BJ (cell line): ENCODE measurements at regions of chr9 and their contacts with region 1.

Region 1: DNA sequence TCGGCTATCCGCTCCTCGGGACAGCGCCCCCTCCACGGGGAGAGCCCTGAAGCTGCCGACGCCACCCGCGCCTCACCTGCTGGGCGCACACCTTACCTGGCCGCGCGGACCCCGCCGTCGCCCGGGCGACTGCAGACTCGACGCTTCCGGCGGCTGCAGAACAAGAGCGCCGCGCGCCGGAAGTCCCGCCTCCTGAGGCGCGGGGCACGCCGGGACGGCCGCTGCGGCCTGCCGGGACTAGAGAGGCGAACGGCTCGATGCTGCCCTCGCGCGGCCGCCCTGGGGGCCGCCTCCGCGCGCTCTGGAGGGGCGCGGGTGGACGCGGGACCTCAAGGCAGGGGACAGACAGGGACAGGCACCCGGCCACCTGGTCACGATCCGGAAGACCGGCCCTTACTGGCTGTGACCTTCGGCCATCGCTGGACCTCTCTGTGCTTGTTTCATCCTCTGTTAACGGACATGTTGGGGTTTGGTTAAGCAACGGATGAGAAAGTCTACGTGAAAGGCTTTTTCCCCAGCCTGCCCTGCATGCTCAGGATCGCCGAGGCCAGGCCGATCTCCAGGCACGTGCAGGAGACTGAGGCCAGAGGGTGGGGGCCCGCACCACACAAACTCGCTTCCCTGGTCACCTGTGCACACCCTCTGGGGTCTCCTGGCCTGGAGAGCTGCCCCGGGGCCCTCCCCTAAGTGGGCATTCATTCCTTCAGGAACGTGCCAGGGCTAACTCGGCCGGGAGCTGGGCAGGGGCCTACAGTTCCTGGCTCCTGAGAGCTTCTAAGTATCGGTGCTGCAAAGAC is at the start of gene SNAPC4:
- DNase-seq: peak; percentile 17
- H3K4me3 ChIP-seq: peak within 1 kb of the TSS; percentile 59
- H3K27me3 ChIP-seq: no peaks in the 10 kb centered on the region
- CTCF ChIP-seq: peak; percentile 58
- polyA plus RNA-seq, gene SNAPC4: 1.6 and 1.7 TPM in 2 replicates

Region 2: GRCh38 chr9:136174779-136175615 is 225.2 kb before region 1 on chr9:
- CTCF ChIA-PET with region 1: no interaction called
- POLR2A ChIA-PET with region 1: no interaction called
- DNase-seq: no peak
- H3K4me3 ChIP-seq: no peak overlapping the region
- H3K27me3 ChIP-seq: peaks cover 11% of the 10 kb centered on the region
- CTCF ChIP-seq: 0 out of 2 replicates have a peak, but pooled peaks have one; percentile 15

Region 3: GRCh38 chr9:136363606-136364370 is 36.4 kb before region 1 on chr9 and contains the start of gene DNLZ:
- CTCF ChIA-PET with region 1: interaction called, 14 read pairs
- POLR2A ChIA-PET with region 1: no interaction called
- DNase-seq: no peak
- H3K4me3 ChIP-seq: peak within 1 kb of the TSS; percentile 78
- H3K27me3 ChIP-seq: no peaks in the 10 kb centered on the region
- CTCF ChIP-seq: peak; percentile 75
- polyA plus RNA-seq, gene DNLZ: 7.2 and 8.5 TPM in 2 replicates

Region 4: DNA sequence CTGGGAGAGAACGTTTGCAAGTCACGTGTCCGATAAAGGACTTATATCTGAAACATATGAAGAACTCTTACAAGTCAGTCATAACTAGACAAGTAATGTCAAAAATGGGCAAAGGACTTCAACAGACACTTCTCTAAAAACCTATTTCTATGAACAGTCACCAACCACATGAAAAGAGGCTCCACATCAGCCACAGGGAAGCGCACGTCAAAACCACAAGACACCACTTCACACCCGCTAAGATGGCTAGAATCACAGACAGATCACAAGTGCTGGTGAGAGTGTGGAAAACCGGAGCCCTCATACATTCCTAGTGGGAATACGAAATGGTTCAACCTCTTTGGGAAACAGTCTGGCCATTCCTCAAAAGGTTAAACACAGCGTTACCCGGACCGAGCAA is 15.2 kb before region 1 on chr9:
- CTCF ChIA-PET with region 1: interaction called, 15 read pairs
- POLR2A ChIA-PET with region 1: no interaction called
- DNase-seq: no peak
- H3K4me3 ChIP-seq: no peak overlapping the region
- H3K27me3 ChIP-seq: no peaks in the 10 kb centered on the region
- CTCF ChIP-seq: no peak